Dendritic cell treated with granulocyte-macrophage colony-stimulating factor and Interleukin-4, amounts not matched to agents 40 ng/mL and 50 ng/mL, for 4 days (primary cell): ENCODE measurements at regions of chr2 and their contacts with region 1.

Region 1: GRCh38 chr2:179218848-179219594 is 45.6 kb downstream of the SESTD1 start:
- H3K4me3 Mint-ChIP-seq: no peak overlapping the region
- H3K27ac Mint-ChIP-seq: no peak overlapping the region
- H3K4me1 Mint-ChIP-seq: peaks cover 31% of the 10 kb centered on the region
- H3K27me3 Mint-ChIP-seq: no peaks in the 10 kb centered on the region

Region 2: DNA sequence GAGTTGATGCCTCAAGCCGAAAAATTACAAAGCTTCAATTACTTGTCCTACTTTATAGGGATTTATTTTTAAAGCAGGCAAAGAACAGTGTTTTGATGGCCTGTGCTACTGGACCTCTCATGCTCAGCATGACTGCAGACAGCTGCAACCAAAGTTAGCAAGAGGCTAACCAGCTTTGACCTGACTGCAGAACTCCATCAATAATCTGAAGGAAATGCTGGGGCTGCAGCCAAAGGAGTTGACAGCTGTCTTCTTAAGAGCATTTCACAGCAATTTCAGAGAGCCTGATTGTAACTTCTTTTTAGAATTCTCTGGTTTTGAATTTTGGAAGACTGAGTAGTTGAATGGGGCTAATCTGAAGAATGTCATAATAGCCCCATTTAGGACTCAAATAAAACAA is 92.1 kb after region 1 on chr2:
- intact Hi-C with region 1: no loop called
- H3K4me3 Mint-ChIP-seq: no peak overlapping the region
- H3K27ac Mint-ChIP-seq: no peak overlapping the region
- H3K4me1 Mint-ChIP-seq: peaks cover 5% of the 10 kb centered on the region
- H3K27me3 Mint-ChIP-seq: no peaks in the 10 kb centered on the region

Region 3: DNA sequence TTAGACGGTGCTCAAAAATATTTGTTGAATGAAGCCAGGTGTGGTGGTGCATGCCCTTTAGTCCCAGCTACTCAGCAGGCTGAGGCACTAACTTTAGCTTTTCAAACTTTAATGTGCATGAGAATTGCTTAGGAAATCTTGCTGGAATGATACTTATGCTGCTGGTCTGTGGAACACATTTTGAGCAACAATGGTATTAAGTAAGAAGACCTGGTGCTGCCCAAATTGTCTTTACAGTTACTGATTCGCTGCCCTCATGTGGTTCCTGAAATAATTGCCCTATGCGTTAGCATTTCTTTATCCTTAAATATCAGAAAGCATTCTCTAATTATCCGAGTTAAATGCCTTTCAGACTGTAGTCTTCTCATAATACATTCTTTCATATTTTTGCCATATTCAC is 121.6 kb after region 1 on chr2:
- intact Hi-C with region 1: loop called (anchors 2 kb)
- H3K4me3 Mint-ChIP-seq: no peak overlapping the region
- H3K27ac Mint-ChIP-seq: no peak overlapping the region
- H3K4me1 Mint-ChIP-seq: peaks cover 13% of the 10 kb centered on the region
- H3K27me3 Mint-ChIP-seq: no peaks in the 10 kb centered on the region

Region 4: GRCh38 chr2:179440642-179441251 is 221.7 kb after region 1 on chr2:
- intact Hi-C with region 1: loop called (anchors 5 kb)
- H3K4me3 Mint-ChIP-seq: no peak overlapping the region
- H3K27ac Mint-ChIP-seq: no peak overlapping the region
- H3K4me1 Mint-ChIP-seq: peaks cover 6% of the 10 kb centered on the region
- H3K27me3 Mint-ChIP-seq: no peaks in the 10 kb centered on the region